ENCODE measurements at regions of chr14 and their contacts with region 1.

Region 1: DNA sequence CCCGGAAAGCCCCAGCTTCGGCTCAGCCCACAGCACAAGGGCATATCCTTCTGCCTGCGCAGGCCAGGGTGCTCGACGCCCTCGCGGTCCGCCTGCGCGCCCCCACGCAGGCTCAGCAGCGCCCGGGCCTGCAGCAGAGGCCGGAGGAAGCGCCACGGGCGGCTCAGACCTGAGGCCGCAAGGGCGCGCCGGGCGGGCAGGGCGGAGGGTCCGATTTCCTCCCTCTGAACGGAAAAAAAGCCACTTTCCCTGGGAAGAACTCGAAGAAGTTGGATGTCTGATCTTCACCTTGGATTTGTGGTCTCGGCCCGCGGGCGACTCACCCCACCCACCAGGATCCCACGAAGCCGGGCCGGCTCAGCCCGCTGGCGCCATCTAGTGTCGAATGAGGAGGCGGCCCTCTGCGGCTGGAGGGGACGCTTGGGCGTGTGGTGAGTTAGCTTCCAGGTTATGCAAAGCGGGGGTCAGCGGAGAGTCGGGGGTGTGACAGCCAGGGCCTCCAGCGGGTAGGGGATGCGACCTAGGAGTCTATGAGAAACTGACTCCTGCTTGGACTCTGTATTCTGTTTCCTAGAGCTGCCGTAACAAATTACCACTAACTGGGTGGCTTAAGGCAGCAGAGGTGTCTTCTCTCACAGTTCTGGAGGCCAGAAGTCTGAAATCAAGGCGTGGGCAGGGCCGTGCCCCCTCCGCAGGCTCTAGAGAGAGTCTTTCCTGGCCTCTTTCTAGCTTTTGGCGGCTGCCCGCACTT is 40.0 kb upstream of the SRSF5 start:
- DNase-seq: peak; percentile 19
- ATAC-seq: peak; percentile 97
- H3K4me3 ChIP-seq: peak overlapping the region; percentile 58; the same call in 1 of the 2 replicates
- H3K27ac ChIP-seq: no peak overlapping the region
- H3K4me1 ChIP-seq: peaks cover 4% of the 10 kb centered on the region; the same call in 1 of the 2 replicates
- H3K27me3 ChIP-seq: no peaks in the 10 kb centered on the region
- CTCF ChIP-seq: peak; percentile 94 to 98 (median 96)
- EP300 ChIP-seq: no peak
- POLR2A ChIP-seq: no peak
- RAD21 ChIP-seq: peak; percentile 99

Region 2: DNA sequence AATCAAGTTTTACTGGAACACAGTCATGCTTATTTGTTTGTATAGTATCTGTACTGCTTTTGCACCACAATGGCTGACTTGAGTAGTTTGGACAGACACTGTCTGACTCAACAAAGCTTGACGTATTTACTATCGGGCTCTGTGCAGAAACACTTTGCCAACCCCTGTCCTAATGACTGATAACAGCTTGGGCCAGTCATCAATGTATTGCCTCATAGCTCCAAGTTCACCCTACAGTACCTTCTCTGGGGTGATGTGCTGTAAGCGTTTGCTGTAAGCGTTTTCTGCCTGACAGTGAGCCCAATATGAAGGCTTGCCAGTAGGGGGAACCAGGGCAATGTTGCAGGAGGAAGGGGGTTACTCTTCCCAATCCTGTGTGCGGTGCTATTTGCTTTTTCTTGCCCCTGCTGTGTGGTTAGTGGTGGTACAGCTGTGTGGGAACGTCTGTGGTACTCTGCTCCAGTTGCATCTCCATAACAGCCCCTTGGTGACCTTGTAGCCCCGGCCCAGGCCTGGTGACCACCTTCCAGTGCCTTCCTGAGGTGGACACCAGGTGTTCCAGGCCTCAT is 146.8 kb before region 1 on chr14:
- CTCF ChIA-PET with region 1: interaction called, 16 read pairs
- POLR2A ChIA-PET with region 1: no interaction called
- RAD21 ChIA-PET with region 1: interaction called, 8 read pairs
- SMC1A ChIA-PET with region 1: interaction called, 12 read pairs
- in situ Hi-C with region 1: loop called (anchors 5 kb)
- intact Hi-C with region 1: loop called (anchors 1 kb)
- DNase-seq: no peak
- ATAC-seq: peak; percentile 74
- H3K4me3 ChIP-seq: no peak overlapping the region
- H3K27ac ChIP-seq: no peak overlapping the region
- H3K4me1 ChIP-seq: no peaks in the 10 kb centered on the region
- H3K27me3 ChIP-seq: peaks cover 0 to 1% of the 10 kb centered on the region in 2 experiments; a peak in 1 of 4 replicates
- CTCF ChIP-seq: peak; percentile 43 to 53 (median 47)
- EP300 ChIP-seq: no peak
- POLR2A ChIP-seq: no peak
- RAD21 ChIP-seq: peak; percentile 39

Region 3: GRCh38 chr14:69593018-69593677 is 133.8 kb before region 1 on chr14:
- CTCF ChIA-PET with region 1: interaction called, 36 read pairs
- POLR2A ChIA-PET with region 1: no interaction called
- RAD21 ChIA-PET with region 1: interaction called, 5 read pairs
- SMC1A ChIA-PET with region 1: interaction called, 4 read pairs
- in situ Hi-C with region 1: no loop called
- intact Hi-C with region 1: no loop called
- DNase-seq: no peak
- ATAC-seq: peak; percentile 86
- H3K4me3 ChIP-seq: no peak overlapping the region
- H3K27ac ChIP-seq: no peak overlapping the region
- H3K4me1 ChIP-seq: peaks cover 4% of the 10 kb centered on the region; the same call in 1 of the 2 replicates
- H3K27me3 ChIP-seq: no peaks in the 10 kb centered on the region
- CTCF ChIP-seq: no peak
- EP300 ChIP-seq: no peak
- POLR2A ChIP-seq: no peak
- RAD21 ChIP-seq: no peak

Region 4: DNA sequence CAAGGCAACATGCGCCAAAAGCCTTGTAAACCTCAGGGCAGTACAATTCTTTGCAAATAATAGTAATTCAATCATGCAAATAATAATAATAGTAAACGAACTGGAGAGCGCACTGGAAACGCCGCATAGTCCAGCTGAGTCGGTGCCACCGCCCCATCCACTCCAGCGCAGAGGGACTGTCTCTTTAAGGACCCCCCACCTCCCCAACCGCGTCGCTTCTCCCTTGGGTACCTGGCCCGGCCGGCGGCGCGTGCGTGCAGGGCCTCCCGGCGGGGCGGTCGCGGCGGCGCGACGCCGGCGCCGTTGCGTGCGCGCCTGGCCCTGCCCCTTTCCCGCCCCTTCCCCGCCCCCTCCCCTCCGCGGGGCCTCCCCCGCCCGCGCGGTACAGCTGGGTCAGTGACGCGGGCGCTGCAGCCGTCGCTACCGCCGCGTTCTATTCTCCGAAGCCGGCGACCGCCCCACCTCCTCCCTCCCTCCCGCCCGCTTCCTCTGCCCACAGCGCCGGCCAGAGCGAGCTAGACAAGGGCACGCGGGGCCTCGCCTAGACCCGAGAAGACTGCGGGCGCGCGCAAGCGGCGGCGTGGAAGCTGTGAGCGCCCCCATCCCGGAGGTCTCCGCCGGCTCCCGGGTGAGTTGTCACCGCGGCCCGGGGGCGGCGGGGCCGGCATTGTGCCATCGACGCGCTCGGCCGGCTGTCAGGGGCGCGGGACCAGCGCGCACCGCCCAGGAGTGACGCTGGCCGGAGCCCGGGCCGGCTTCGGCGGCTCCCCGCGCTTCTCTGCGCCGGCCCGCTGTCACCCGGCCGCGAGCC is 115.5 kb before region 1 on chr14 and contains the start of gene SUSD6:
- CTCF ChIA-PET with region 1: interaction called, 90 read pairs
- POLR2A ChIA-PET with region 1: no interaction called
- RAD21 ChIA-PET with region 1: interaction called, 38 read pairs
- SMC1A ChIA-PET with region 1: interaction called, 85 read pairs
- in situ Hi-C with region 1: loop called (anchors 5 kb)
- intact Hi-C with region 1: no loop called
- DNase-seq: no peak
- ATAC-seq: peak; percentile 62
- H3K4me3 ChIP-seq: peak within 1 kb of the TSS; percentile 88
- H3K27ac ChIP-seq: peak within 1 kb of the TSS; percentile 97
- H3K4me1 ChIP-seq: peaks cover 21% of the 10 kb centered on the region
- H3K27me3 ChIP-seq: no peaks in the 10 kb centered on the region
- CTCF ChIP-seq: no peak
- EP300 ChIP-seq: no peak
- POLR2A ChIP-seq: peak; percentile 76
- RAD21 ChIP-seq: no peak
- polyA plus RNA-seq, gene SUSD6: 6.6 to 9.4 TPM

Region 5: DNA sequence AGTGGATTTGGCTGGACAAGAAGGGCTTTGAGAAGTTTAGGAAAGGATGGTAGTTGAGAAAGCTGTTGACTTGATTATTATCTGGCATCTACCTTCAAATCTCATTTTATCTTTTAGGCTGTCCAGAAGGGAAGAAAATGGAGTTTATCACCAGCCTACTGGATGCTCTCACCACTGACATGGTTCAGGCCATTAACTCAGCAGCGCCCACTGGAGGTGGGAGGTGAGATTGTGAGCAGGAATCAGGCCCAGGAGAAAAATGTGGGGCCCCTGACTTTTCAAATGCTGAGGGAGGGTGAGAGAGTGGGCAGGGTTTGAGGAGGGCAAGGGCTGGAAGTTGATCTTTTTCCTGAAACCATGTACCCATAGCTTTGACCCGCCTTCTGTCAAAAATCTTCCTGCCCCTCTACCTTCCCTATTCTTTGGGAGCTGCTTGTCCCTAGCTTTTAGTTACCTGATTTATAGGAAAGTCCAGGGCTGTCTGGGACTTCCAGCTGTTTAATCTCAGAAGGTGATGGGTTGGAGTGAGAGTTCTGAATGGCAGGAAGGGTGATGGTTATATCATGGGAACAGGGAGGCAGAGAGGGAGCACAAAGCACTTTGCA is 286.4 kb after region 1 on chr14:
- CTCF ChIA-PET with region 1: interaction called, 3 read pairs
- POLR2A ChIA-PET with region 1: no interaction called
- RAD21 ChIA-PET with region 1: no interaction called
- SMC1A ChIA-PET with region 1: no interaction called
- in situ Hi-C with region 1: loop called (anchors 5 kb)
- intact Hi-C with region 1: loop called (anchors 5 kb)
- DNase-seq: no peak
- ATAC-seq: peak; percentile 78
- H3K4me3 ChIP-seq: no peak overlapping the region
- H3K27ac ChIP-seq: no peak overlapping the region
- H3K4me1 ChIP-seq: peaks cover 27% of the 10 kb centered on the region
- H3K27me3 ChIP-seq: no peaks in the 10 kb centered on the region
- CTCF ChIP-seq: peak; percentile 50 to 90 (median 86)
- EP300 ChIP-seq: no peak
- POLR2A ChIP-seq: no peak
- RAD21 ChIP-seq: peak; percentile 59

Region 6: DNA sequence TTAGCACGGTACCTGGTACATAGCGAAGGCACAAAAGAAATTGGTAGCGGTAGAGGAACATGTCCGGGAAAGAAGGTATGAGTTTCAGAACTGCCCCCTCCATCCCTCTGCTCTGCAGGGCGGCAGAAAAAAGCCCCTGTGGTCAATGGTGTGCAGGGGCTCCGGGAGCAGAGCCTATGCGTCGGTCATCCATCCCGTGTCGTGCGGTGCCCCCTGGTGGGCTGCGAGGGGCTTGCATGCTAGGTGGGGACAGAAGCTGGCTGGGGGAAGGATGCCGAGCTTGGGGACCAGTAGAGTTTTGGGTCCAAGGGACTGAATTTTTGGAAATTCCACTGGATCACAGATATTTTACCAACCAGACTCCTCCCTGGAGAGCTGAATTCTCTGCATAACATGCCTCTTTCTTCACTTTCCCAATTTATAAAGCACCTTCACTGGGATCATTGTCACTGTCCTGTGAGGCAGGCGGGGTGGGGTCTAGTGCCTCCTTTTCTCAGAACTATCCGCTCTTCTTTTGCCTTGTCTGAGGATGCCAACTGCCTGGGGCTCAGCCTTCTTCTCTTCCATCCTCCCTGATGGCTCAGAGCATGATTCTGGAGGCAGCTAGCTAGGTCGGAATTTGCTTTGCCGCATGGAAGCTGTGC is 301.0 kb after region 1 on chr14:
- CTCF ChIA-PET with region 1: interaction called, 12 read pairs
- POLR2A ChIA-PET with region 1: no interaction called
- RAD21 ChIA-PET with region 1: interaction called, 8 read pairs
- SMC1A ChIA-PET with region 1: interaction called, 8 read pairs
- in situ Hi-C with region 1: no loop called
- intact Hi-C with region 1: loop called (anchors 5 kb)
- DNase-seq: no peak
- ATAC-seq: peak; percentile 96
- H3K4me3 ChIP-seq: no peak overlapping the region
- H3K27ac ChIP-seq: no peak overlapping the region
- H3K4me1 ChIP-seq: no peaks in the 10 kb centered on the region
- H3K27me3 ChIP-seq: no peaks in the 10 kb centered on the region; a peak in 1 of 4 replicates
- CTCF ChIP-seq: peak; percentile 92 to 95 (median 94)
- EP300 ChIP-seq: no peak
- POLR2A ChIP-seq: no peak
- RAD21 ChIP-seq: peak; percentile 99

Measured in GM12878 (cell line).